Gastrocnemius medialis (tissue), 4 donors: ENCODE measurements at regions of chr14 and their contacts with region 1.

Region 1: GRCh38 chr14:105203057-105203531 is 22.0 kb upstream of the NUDT14 start:
- DNase-seq: peak in 1 of 2 donors; percentile 65
- ATAC-seq: peak; percentile 39 to 62
- H3K4me3 ChIP-seq: no peak overlapping the region
- H3K27ac ChIP-seq: no peak overlapping the region
- H3K4me1 ChIP-seq: peaks cover 5 to 30% of the 10 kb centered on the region in 2 donors
- H3K27me3 ChIP-seq: peaks cover 0 to 12% (median 8%) of the 10 kb centered on the region in 3 donors
- CTCF ChIP-seq: peak; percentile 83 to 97 (median 95)
- POLR2A ChIP-seq: no peak

Region 2: DNA sequence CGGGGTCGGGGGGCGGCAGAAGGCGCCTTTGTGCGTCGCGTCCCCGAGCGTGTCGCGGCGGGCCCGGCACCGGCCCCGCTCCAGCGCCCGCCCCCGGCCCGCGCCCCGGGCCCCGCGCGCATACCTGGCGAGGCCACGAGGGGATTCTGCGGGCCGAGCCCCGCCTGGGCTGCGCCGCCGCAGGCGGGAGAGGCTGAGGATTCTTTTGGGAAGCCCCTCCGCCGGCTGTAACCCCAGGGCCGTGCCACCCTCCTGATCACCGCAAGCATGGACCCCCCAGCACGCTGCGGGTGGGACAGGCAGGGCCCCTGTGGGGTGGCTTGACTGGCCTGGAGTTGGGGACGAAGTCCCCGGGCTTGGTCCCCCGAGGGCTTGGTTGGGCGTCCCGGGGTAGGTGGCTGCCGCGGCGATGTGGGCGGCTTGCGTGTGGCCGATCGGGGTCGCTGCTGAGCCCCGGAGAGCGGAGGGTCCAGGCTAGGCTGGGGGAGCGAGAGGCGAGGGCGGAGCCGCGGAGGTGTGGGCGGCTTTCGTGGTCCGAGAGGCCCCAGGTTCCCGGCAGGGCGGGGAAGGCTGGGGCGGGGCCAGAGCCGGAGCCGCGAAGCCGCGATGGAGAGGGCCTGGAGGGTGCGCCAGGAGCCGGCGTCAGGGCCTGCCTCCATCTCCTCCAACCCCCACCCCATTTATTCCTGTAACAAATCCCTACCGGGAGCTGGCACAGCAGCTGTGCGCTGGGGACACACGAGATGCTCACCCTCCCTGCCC is 109.5 kb before region 1 on chr14:
- in situ Hi-C with region 1: no loop called
- intact Hi-C with region 1: loop called (anchors 5 kb)
- DNase-seq: no peak
- ATAC-seq: no peak
- H3K4me3 ChIP-seq: peak overlapping the region; percentile 49 to 66 (median 58)
- H3K27ac ChIP-seq: peak overlapping the region; percentile 24 to 64 (median 46)
- H3K4me1 ChIP-seq: peaks cover 3 to 33% of the 10 kb centered on the region in 2 donors
- H3K27me3 ChIP-seq: peaks cover 3 to 8% (median 7%) of the 10 kb centered on the region in 3 donors
- CTCF ChIP-seq: no peak
- POLR2A ChIP-seq: no peak

Region 3: GRCh38 chr14:105281371-105282097 is 78.4 kb after region 1 on chr14:
- in situ Hi-C with region 1: no loop called
- intact Hi-C with region 1: loop called (anchors 5 kb)
- DNase-seq: no peak
- ATAC-seq: peak; percentile 58
- H3K4me3 ChIP-seq: no peak overlapping the region
- H3K27ac ChIP-seq: no peak overlapping the region
- H3K4me1 ChIP-seq: peaks cover 11 to 16% of the 10 kb centered on the region in 2 donors
- H3K27me3 ChIP-seq: no peaks in the 10 kb centered on the region
- CTCF ChIP-seq: peak in 4 of 5 experiments; percentile 31 to 62 (median 52)
- POLR2A ChIP-seq: no peak

Region 4: GRCh38 chr14:105330491-105330895 is 127.4 kb after region 1 on chr14:
- in situ Hi-C with region 1: loop called in 1 of 4 experiments (anchors 25 kb)
- intact Hi-C with region 1: no loop called
- DNase-seq: no peak
- ATAC-seq: no peak
- H3K4me3 ChIP-seq: no peak overlapping the region
- H3K27ac ChIP-seq: peak overlapping the region in 2 of 4 donors; percentile 90 to 94
- H3K4me1 ChIP-seq: peaks cover 81 to 88% of the 10 kb centered on the region in 2 donors
- H3K27me3 ChIP-seq: no peaks in the 10 kb centered on the region
- CTCF ChIP-seq: no peak
- POLR2A ChIP-seq: no peak

Region 5: DNA sequence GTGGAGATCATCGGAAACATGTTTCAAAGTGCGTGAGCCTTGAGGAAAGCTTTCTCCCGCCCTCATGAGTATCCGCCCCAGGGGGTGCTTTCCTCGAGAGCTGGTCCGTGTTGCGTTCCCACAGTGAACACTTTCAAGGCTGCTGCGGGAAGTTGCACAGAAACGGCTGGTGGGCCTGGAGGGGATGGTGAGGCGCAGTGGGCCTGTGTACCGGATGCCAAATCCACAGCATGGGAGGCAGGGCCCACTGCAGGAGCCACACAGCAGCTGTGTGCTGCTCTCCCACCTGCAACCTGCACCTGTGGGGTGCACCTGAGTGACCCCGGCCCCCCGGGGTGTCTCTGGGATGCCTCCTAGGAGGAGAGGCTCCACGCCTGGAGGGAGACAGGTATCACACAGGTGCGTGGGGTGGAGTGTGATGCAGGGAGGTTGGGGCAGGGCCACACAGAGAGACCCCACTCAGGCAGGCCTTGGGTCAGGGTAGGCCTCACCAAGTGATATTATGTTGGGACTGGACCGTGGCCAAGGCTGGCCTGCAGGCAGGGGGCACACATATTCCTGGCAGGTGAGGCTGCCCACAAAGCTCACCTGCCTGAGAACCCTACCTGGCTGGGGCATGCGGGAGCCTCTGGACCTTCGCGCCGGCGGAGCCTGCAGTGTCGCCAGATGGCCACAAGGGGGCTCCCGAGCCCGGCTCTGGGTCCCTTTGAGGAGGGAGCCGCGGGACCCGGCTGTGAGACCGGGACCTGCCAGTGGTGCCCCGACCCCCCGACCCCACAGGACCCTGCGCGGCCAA is 334.5 kb after region 1 on chr14:
- in situ Hi-C with region 1: no loop called
- intact Hi-C with region 1: no loop called
- DNase-seq: no peak
- ATAC-seq: peak in 1 of 2 donors; percentile 62
- H3K4me3 ChIP-seq: no peak overlapping the region
- H3K27ac ChIP-seq: no peak overlapping the region
- H3K4me1 ChIP-seq: no peaks in the 10 kb centered on the region
- H3K27me3 ChIP-seq: peaks cover 13 to 28% (median 17%) of the 10 kb centered on the region in 3 donors
- CTCF ChIP-seq: peak; percentile 66 to 95 (median 78)
- POLR2A ChIP-seq: no peak